Dorsolateral prefrontal cortex (tissue), 120 donors: ENCODE measurements at regions of chr14 and their contacts with region 1.

Region 1: DNA sequence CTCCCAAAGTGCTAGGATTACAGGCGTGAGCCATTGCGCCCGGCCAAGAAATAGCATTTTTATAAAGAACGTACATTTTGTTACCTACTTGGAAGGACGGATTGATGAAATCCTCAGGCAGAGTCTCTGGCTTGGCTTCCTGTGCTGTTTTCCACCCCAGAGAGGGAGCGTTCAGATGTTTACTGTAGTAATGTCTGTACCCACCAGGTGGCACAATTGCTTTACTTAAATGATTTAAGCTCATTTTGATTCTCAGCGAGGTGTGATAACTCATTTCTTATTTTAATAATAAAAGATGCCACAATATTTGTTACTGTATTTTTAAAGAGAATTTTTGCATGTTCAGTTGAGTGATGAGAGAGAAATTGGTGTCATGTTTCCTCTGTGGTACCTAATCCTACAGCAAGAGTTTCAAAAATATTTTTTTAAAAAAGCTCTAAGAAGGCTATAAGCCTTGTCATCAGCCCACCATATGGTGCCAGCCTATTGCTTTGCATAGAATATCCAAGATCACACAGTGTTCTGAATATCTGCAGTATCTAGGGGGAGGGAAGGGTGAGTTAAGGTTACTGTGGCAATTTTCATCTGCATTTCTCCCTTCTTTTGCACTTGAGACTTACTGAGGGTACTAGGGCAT is 82.6 kb upstream of the TRAF3 start:
- DNase-seq: peak in 5 of 10 donors; percentile 36 to 72 (median 55)
- H3K4me3 ChIP-seq: peak overlapping the region in 2 of 59 donors; percentile 4 to 7
- H3K27ac ChIP-seq: peak overlapping the region in 1 of 59 donors; percentile 21
- H3K27me3 ChIP-seq: no peaks in the 10 kb centered on the region
- CTCF ChIP-seq: peak; percentile 56 to 94 (median 84)

Region 2: GRCh38 chr14:102917469-102918211 is 223.0 kb after region 1 on chr14:
- intact Hi-C with region 1: loop called (anchors 5 to 10 kb)
- DNase-seq: peak in 7 of 10 donors; percentile 45 to 65 (median 59)
- H3K4me3 ChIP-seq: no peak overlapping the region
- H3K27ac ChIP-seq: no peak overlapping the region
- H3K27me3 ChIP-seq: peaks cover 0 to 7% (median 1%) of the 10 kb centered on the region in 45 donors
- CTCF ChIP-seq: peak in 55 of 56 donors; percentile 26 to 73 (median 55)

Region 3: DNA sequence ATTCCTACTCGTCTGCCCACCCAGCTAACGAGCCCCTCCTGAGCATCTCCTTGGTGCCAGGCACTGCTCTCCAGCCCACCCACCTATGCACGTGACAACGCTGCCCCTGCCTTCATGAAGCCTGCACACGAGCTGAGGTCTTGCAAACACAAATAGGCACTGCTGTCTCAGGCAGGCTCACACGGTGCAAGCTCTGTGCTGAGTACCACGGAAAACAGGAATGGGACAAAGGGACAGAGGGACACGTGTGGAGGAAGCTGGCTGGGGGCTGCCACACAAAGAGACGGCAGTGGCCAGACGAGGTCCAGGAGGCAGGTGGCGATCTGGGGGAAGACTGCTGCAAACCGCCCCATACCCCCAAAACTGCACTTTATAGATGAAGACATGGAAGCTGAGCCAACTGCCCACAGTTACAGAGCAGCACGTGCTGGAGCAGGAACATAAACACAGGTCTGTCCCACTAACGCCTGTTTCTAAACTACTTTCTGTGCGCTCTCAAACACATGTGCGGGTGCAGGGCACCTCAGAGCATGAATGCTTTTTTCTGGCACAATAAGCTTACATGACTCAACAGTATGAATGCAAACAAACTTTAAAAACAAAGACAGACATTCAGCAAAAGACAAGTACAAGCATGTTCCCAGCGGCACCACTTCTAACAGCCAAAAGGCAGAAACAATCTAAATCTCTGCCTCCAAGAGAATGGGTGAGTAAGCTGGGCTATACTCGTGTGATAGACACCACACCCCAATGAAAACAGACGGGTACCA is 292.3 kb after region 1 on chr14:
- intact Hi-C with region 1: loop called in 1 of 2 experiments (anchors 5 kb)
- DNase-seq: peak in 1 of 10 donors; percentile 55
- H3K4me3 ChIP-seq: peak overlapping the region in 3 of 59 donors; percentile 4 to 25 (median 17)
- H3K27ac ChIP-seq: peak overlapping the region; percentile 1 to 89 (median 77)
- H3K27me3 ChIP-seq: no peaks in the 10 kb centered on the region
- CTCF ChIP-seq: peak in 1 of 56 donors; percentile 12

Region 4: GRCh38 chr14:103078093-103078749 is 383.6 kb after region 1 on chr14:
- intact Hi-C with region 1: loop called in 1 of 2 experiments (anchors 10 kb)
- DNase-seq: peak; percentile 72 to 83 (median 80)
- H3K4me3 ChIP-seq: no peak overlapping the region
- H3K27ac ChIP-seq: no peak overlapping the region
- H3K27me3 ChIP-seq: peaks cover 0 to 2% (median 0%) of the 10 kb centered on the region in 45 donors
- CTCF ChIP-seq: peak in 55 of 56 donors; percentile 16 to 79 (median 68)

Region 5: GRCh38 chr14:103091041-103091882 is 396.6 kb after region 1 on chr14:
- intact Hi-C with region 1: loop called in 1 of 2 experiments (anchors 5 kb)
- DNase-seq: no peak
- H3K4me3 ChIP-seq: peak overlapping the region in 56 of 59 donors; percentile 3 to 66 (median 45)
- H3K27ac ChIP-seq: no peak overlapping the region
- H3K27me3 ChIP-seq: peaks cover 0 to 23% (median 6%) of the 10 kb centered on the region in 45 donors
- CTCF ChIP-seq: peak in 50 of 56 donors; percentile 10 to 66 (median 42)

Region 6: DNA sequence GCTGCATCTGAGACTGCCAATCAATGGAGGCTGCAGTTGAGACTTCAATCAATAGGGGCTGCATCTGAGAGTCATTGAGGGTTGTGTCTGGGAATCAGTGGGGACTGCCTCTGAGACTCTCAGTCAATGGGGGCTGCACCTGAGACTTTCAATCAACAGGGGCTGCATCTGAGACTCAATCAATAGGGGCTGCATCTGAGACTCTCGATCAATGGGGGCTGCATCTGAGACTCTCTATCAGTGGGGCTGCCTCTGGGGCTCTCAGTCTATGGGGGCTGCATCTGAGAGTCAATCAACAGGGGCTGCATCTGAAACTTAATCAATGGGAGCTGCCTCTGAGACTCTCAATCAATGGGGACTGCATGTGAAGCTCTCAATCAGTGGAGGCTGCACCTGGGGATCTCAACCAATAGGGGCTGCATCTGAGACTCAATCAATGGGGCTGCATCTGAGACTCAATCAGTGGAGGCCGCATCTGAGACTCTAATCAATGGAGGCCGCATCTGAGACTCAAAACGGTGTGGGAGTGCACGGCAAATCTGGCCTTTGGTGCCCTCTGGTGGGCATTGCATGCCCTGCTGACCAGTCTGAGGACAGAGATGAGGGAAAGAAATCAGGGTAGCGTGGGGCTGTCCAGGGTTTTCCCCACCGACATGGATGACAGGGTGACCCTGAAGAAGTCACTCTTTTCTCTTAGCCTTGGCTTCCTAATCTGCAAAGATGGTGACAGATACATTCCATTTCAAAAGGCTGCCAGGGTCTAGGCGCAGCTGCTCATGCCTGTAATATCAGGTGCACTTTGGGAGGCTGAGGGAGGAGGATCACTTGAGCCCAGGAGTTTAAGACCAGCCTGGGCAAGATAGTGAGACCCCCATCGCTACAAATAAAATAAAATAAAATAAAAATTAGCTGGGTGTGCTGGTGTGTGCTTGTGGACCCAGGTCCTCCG is 598.1 kb after region 1 on chr14:
- intact Hi-C with region 1: loop called in 1 of 2 experiments (anchors 5 kb)
- DNase-seq: peak; percentile 68 to 89 (median 78)
- H3K4me3 ChIP-seq: no peak overlapping the region
- H3K27ac ChIP-seq: no peak overlapping the region
- H3K27me3 ChIP-seq: peaks cover 0 to 13% (median 0%) of the 10 kb centered on the region in 45 donors
- CTCF ChIP-seq: peak; percentile 61 to 97 (median 93)